CD4-positive, alpha-beta memory T cell (primary cell): ENCODE measurements at regions of chr15 and their contacts with region 1.

Region 1: GRCh38 chr15:46312133-46312740 is 677.4 kb downstream of the SQOR start:
- DNase-seq: peak in 4 of 5 donors; percentile 22 to 35 (median 27)
- H3K4me3 ChIP-seq: no peak overlapping the region
- H3K4me3 Mint-ChIP-seq: no peak overlapping the region
- H3K27ac ChIP-seq: no peak overlapping the region
- H3K27ac Mint-ChIP-seq: no peak overlapping the region
- H3K4me1 ChIP-seq: no peaks in the 10 kb centered on the region
- H3K4me1 Mint-ChIP-seq: no peaks in the 10 kb centered on the region
- H3K27me3 ChIP-seq: no peaks in the 10 kb centered on the region
- H3K27me3 Mint-ChIP-seq: no peaks in the 10 kb centered on the region

Region 2: DNA sequence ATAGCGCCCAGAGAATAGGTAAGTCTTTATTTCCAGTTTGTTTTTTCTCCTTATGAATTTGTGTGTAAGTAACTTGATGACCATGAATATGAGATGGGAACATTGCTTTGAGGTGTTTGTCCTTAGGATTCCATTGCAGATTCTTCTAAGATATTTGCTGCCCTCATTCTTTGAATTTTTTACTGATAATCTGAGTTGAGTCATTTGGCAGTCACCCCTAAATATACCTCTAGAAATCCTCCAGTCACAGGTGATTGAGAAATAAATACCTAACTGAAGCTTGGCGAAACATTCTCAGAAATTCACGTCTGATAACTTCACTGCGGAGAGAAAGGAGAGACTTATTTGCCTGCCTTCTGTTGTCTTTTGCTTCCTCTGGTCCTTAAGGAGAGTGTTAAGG is 331.9 kb before region 1 on chr15:
- CTCF ChIA-PET with region 1: no interaction called
- POLR2A ChIA-PET with region 1: no interaction called
- intact Hi-C with region 1: no loop called
- DNase-seq: no peak
- H3K4me3 ChIP-seq: no peak overlapping the region
- H3K4me3 Mint-ChIP-seq: no peak overlapping the region
- H3K27ac ChIP-seq: no peak overlapping the region
- H3K27ac Mint-ChIP-seq: no peak overlapping the region
- H3K4me1 ChIP-seq: no peaks in the 10 kb centered on the region
- H3K4me1 Mint-ChIP-seq: no peaks in the 10 kb centered on the region
- H3K27me3 ChIP-seq: no peaks in the 10 kb centered on the region
- H3K27me3 Mint-ChIP-seq: no peaks in the 10 kb centered on the region

Region 3: GRCh38 chr15:46297766-46298165 is 14.5 kb before region 1 on chr15:
- CTCF ChIA-PET with region 1: interaction called, 13 read pairs
- POLR2A ChIA-PET with region 1: no interaction called
- intact Hi-C with region 1: no loop called
- DNase-seq: no peak
- H3K4me3 ChIP-seq: no peak overlapping the region
- H3K4me3 Mint-ChIP-seq: no peak overlapping the region
- H3K27ac ChIP-seq: no peak overlapping the region
- H3K27ac Mint-ChIP-seq: no peak overlapping the region
- H3K4me1 ChIP-seq: no peaks in the 10 kb centered on the region
- H3K4me1 Mint-ChIP-seq: no peaks in the 10 kb centered on the region
- H3K27me3 ChIP-seq: no peaks in the 10 kb centered on the region
- H3K27me3 Mint-ChIP-seq: no peaks in the 10 kb centered on the region